ENCODE measurements at regions of chr15 and their contacts with region 1.

Region 1: GRCh38 chr15:60916679-60917460 is 312.2 kb downstream of the RORA start:
- DNase-seq: peak; percentile 88
- ATAC-seq: peak; percentile 97
- H3K4me3 Mint-ChIP-seq: no peak overlapping the region
- H3K27ac Mint-ChIP-seq: no peak overlapping the region
- H3K4me1 Mint-ChIP-seq: peaks cover 8% of the 10 kb centered on the region
- H3K27me3 Mint-ChIP-seq: no peaks in the 10 kb centered on the region

Region 2: GRCh38 chr15:60507596-60508424 is 409.1 kb before region 1 on chr15:
- CTCF ChIA-PET with region 1: interaction called, 52 read pairs
- POLR2A ChIA-PET with region 1: no interaction called
- DNase-seq: peak; percentile 75
- ATAC-seq: peak; percentile 80
- H3K4me3 Mint-ChIP-seq: peak overlapping the region; percentile 19
- H3K27ac Mint-ChIP-seq: peak overlapping the region; percentile 84
- H3K4me1 Mint-ChIP-seq: peaks cover 42% of the 10 kb centered on the region
- H3K27me3 Mint-ChIP-seq: no peaks in the 10 kb centered on the region

Region 3: DNA sequence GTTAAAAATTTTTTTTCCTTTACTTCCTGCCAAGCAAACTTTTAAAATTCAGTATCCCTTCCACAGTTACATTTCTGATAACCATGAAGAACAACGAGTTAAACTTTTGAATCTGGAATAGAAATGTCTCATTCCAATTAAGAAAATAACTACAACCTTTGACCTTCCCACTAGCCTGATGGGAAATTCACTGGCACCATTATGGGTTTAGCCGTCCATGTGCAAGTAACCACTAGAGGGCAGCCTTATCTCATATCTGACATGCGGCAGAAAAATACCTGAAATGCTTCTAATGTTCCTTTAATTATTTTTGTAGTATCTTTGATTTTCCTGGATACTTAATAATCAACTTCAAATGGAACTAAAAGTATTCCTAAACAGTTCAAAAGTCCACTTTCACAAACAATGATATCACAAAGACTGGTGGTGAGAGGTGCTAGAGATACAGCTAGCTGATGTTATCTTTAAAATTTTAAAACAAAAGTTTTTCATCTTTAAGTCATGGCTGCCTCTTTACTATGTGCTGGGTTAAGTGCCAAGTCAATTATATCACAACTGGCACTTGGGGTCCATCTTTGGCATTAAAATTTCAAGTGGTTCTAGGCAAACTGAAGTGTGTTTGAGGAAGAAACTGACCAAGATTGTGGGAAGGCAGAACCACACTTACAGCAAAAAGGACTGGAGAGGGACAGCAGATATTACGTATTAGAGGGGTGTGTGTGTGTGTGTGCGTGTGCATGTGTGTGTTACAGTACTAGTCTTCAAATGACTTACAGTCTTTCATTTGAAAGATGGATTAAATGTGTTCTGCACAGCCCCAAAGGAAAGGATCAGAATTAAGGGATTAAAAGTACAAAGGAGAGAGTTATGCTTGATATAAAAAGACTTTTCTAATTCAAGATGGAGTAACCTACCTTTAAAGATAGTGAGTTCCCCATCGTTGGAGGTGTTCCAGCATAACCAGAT is 330.8 kb before region 1 on chr15:
- CTCF ChIA-PET with region 1: interaction called, 135 read pairs
- POLR2A ChIA-PET with region 1: interaction called, 5 read pairs
- DNase-seq: peak; percentile 78
- ATAC-seq: no peak
- H3K4me3 Mint-ChIP-seq: peak overlapping the region; percentile 55
- H3K27ac Mint-ChIP-seq: peak overlapping the region; percentile 84
- H3K4me1 Mint-ChIP-seq: peaks cover 90% of the 10 kb centered on the region
- H3K27me3 Mint-ChIP-seq: no peaks in the 10 kb centered on the region

Region 4: GRCh38 chr15:60672400-60672799 is 244.5 kb before region 1 on chr15:
- CTCF ChIA-PET with region 1: interaction called, 12 read pairs
- POLR2A ChIA-PET with region 1: no interaction called
- DNase-seq: no peak
- ATAC-seq: no peak
- H3K4me3 Mint-ChIP-seq: no peak overlapping the region
- H3K27ac Mint-ChIP-seq: no peak overlapping the region
- H3K4me1 Mint-ChIP-seq: no peaks in the 10 kb centered on the region
- H3K27me3 Mint-ChIP-seq: peaks cover 6% of the 10 kb centered on the region

Region 5: DNA sequence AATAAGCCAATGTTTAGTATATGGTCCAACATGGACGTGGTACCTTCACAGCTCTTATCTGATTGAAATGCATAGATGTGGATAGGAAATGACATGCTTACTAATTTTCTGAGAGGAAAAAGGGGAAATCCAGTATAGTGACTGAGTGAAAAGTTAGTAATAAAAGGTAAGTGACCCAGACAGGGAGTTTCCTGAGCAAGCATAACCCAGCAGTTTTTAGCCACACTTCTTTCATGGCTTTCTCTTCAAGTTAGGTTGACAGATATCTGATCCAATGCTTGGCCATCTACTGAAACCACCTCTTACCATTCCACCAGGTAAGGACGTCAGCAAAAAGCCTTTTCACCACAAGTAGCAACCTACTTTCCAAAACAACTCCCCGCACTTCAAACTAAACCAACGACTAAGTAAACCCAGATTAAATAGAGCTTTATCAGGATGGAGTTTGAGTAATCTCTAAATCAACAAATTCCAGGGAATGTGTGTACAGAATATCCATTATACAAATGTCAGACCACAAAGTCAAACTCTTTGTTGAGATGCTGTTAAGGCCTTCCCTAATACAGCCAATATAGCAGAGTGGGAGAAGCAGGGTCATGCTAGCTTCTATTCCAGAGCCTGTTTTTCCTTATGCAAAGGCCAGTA is 17.4 kb before region 1 on chr15:
- CTCF ChIA-PET with region 1: interaction called, 27 read pairs
- POLR2A ChIA-PET with region 1: no interaction called
- DNase-seq: no peak
- ATAC-seq: peak; percentile 53
- H3K4me3 Mint-ChIP-seq: no peak overlapping the region
- H3K27ac Mint-ChIP-seq: no peak overlapping the region
- H3K4me1 Mint-ChIP-seq: peaks cover 15% of the 10 kb centered on the region
- H3K27me3 Mint-ChIP-seq: peaks cover 2% of the 10 kb centered on the region